CD4-positive, alpha-beta T cell (primary cell): ENCODE measurements at regions of chr10 and their contacts with region 1.

Region 1: DNA sequence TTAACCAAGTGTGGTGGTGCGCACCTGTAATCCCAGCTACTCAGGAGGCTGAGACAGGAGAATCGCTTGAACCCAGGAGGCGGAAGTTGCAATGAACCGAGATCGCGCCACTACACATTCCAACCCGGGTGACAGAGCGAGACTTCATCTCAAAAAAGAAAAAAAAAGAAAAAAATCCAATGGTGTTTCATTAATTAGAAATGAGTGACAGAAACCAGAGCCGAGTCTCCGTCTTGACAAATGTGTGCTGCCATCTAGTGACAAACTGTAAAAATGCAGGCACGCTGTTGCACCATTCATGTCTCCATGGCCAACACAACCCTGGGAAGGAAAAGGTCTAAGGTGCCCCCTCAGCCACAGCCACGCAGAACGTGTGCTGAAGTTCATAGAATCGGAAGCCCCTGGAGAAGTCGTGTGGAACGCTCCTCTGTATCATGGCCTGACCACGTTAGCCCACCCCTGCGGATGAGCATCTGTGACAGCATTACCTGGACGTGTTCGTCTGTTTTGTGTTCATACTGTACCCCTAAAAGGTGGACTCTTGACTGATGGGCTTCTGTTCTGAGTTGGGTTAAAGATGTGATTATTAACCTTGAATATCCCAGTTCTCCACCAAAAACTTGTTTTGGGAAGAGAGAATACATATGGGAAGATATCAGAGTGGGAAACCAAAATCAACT is 94.9 kb downstream of the LYZL2 start:
- DNase-seq: peak; percentile 52 to 89 (median 66)
- ATAC-seq: peak; percentile 39
- H3K4me3 ChIP-seq: no peak overlapping the region
- H3K4me3 Mint-ChIP-seq: no peak overlapping the region
- H3K27ac ChIP-seq: no peak overlapping the region
- H3K27ac Mint-ChIP-seq: no peak overlapping the region
- H3K4me1 ChIP-seq: peaks cover 19% of the 10 kb centered on the region
- H3K4me1 Mint-ChIP-seq: peaks cover 20% of the 10 kb centered on the region
- H3K27me3 ChIP-seq: no peaks in the 10 kb centered on the region
- H3K27me3 Mint-ChIP-seq: no peaks in the 10 kb centered on the region
- CTCF ChIP-seq: peak; percentile 87

Region 2: DNA sequence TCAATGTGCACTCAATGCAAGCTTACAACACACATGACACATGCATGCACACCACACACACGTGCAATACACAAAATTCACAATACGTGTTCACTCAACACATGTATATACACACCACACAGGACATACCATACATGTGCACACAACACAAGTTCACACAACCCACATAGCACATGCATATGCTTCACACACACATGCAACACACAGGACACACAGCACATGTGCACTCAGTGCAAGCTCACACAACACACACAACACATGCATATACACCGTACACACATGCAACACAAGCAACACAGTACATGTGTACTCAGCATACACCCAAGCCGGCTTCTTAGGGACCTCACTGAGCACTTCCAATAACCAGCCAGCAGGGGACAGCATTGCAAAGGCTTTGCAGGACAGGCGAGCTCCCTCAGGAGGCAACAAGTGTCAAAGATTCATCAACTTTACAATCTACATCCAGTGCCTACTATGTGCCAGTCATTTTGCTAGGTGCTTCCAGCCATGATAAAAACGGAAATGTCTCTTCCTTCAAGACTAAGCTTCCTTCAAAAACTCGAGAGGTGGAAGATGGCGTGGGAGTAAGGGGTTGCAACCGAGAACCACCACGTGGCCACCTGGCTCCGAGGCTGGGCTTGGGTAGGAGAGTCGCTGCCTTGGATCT is 536.3 kb before region 1 on chr10:
- CTCF ChIA-PET with region 1: no interaction called
- POLR2A ChIA-PET with region 1: no interaction called
- intact Hi-C with region 1: loop called in 1 of 2 experiments (anchors 5 kb)
- DNase-seq: peak; percentile 62 to 87 (median 68)
- ATAC-seq: peak; percentile 92
- H3K4me3 ChIP-seq: no peak overlapping the region
- H3K4me3 Mint-ChIP-seq: no peak overlapping the region
- H3K27ac ChIP-seq: no peak overlapping the region
- H3K27ac Mint-ChIP-seq: no peak overlapping the region
- H3K4me1 ChIP-seq: peaks cover 6% of the 10 kb centered on the region
- H3K4me1 Mint-ChIP-seq: peaks cover 8% of the 10 kb centered on the region
- H3K27me3 ChIP-seq: peaks cover 17 to 25% of the 10 kb centered on the region in 2 experiments
- H3K27me3 Mint-ChIP-seq: peaks cover 79% of the 10 kb centered on the region
- CTCF ChIP-seq: peak; percentile 92

Region 3: DNA sequence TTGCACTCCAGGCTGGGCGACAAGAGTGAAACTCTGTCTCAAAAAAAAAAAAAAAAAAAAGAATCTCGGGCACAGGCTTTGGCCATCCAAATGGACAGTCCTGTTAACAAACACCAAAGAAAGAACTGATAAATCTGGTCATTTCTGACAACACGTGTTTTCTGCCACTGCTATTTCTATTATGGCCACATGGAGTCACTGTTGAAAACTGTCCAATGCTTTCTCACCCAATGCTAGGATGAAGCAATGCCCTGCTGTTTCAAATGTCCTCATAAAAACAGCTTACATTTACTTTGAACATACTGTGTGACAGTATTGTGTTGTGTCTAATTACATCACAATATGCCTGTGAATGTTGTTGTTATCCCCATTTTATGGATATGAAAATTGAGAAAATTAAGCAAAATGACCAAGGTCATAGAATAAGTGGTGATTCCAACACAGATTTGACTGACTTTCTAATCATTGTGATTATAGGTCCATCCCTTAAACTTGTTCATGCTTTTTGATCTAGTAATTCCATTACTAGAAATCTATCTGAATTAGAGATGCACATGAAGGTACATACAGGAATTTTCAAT is 120.5 kb before region 1 on chr10:
- CTCF ChIA-PET with region 1: interaction called, 14 read pairs
- POLR2A ChIA-PET with region 1: interaction called, 34 read pairs
- intact Hi-C with region 1: loop called (anchors 1 kb)
- DNase-seq: peak in 4 of 14 experiments; percentile 40 to 78 (median 72)
- ATAC-seq: peak; percentile 64
- H3K4me3 ChIP-seq: no peak overlapping the region
- H3K4me3 Mint-ChIP-seq: no peak overlapping the region
- H3K27ac ChIP-seq: no peak overlapping the region
- H3K27ac Mint-ChIP-seq: no peak overlapping the region
- H3K4me1 ChIP-seq: peaks cover 11% of the 10 kb centered on the region
- H3K4me1 Mint-ChIP-seq: peaks cover 13% of the 10 kb centered on the region
- H3K27me3 ChIP-seq: no peaks in the 10 kb centered on the region
- H3K27me3 Mint-ChIP-seq: no peaks in the 10 kb centered on the region
- CTCF ChIP-seq: peak; percentile 81

Region 4: DNA sequence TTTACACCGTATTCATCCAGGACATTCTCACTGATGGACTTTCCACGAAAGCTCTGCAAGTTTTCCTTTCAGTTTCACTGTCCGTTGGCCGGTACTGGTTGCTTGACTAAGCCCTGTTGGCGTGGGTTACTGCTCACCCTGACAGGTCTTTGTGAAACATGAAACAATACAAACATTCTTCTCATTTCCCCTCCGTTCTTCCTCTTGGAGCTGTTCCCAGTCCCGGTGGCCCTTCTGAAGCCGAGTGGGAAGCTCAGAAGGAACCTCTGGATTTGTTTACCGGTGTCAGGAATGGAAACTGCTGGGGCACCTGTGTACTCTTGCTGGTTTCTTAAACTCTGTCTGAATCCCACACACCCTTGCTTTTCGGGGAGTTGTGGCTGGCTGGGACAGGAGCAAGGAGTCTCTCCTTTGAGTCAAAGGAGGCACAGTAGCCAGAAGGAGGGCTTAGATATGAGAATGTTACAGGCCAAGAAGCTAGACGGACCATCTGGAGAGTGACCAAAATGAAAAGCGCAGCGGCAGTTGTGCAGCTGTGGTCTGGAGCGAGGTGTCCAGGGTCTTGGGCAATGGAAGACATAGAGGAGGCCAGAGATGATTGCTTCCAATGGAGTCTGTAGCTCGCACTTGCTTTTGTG is 49.3 kb after region 1 on chr10:
- CTCF ChIA-PET with region 1: no interaction called
- POLR2A ChIA-PET with region 1: interaction called, 3 read pairs
- intact Hi-C with region 1: loop called in 1 of 2 experiments (anchors 5 kb)
- DNase-seq: peak in 3 of 14 experiments; percentile 23 to 54 (median 51)
- ATAC-seq: no peak
- H3K4me3 ChIP-seq: peak overlapping the region; percentile 11
- H3K4me3 Mint-ChIP-seq: peak overlapping the region; percentile 12
- H3K27ac ChIP-seq: no peak overlapping the region
- H3K27ac Mint-ChIP-seq: no peak overlapping the region
- H3K4me1 ChIP-seq: peaks cover 10% of the 10 kb centered on the region
- H3K4me1 Mint-ChIP-seq: no peaks in the 10 kb centered on the region
- H3K27me3 ChIP-seq: no peaks in the 10 kb centered on the region
- H3K27me3 Mint-ChIP-seq: no peaks in the 10 kb centered on the region
- CTCF ChIP-seq: no peak

Region 5: DNA sequence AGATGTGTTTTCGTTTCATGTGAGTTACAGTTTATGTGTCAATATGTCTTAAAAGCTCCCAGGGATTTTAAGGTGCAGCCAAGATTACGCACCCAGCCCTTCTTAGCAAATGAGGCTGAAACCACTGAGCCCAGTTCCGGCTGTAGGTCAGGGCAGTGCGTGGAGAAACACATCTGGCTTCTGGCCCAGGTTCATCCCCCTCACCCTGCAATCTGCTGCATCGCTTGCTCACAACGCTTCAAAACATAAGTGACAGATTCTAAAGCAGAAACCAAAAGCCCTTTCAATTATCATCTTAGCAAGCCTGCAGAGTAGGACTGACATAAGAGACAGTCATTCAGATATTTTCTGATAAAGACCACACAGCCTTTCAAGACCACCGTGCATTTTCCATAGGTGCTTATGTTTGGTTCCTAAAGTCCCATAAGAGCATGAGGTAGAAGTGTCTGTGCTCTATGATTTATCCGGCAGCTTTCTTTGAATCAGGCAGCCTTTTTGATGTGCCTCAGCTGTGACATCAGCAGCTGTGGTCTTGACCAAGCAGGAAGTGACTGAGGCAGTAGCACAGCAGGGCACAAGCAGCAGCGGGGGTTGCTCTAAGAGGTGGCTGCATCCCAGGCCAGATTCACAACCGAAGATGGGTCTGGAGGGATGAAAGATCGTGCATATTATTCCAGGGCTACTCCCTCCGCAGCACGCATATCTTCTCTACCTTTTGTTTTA is 167.0 kb after region 1 on chr10:
- CTCF ChIA-PET with region 1: no interaction called
- POLR2A ChIA-PET with region 1: interaction called, 6 read pairs
- intact Hi-C with region 1: loop called in 1 of 2 experiments (anchors 5 kb)
- DNase-seq: peak; percentile 41 to 87 (median 62)
- ATAC-seq: peak; percentile 65
- H3K4me3 ChIP-seq: peak overlapping the region; percentile 43
- H3K4me3 Mint-ChIP-seq: peak overlapping the region; percentile 85
- H3K27ac ChIP-seq: peak overlapping the region; percentile 51 to 74
- H3K27ac Mint-ChIP-seq: peak overlapping the region; percentile 99
- H3K4me1 ChIP-seq: peaks cover 81% of the 10 kb centered on the region
- H3K4me1 Mint-ChIP-seq: peaks cover 87% of the 10 kb centered on the region
- H3K27me3 ChIP-seq: no peaks in the 10 kb centered on the region
- H3K27me3 Mint-ChIP-seq: no peaks in the 10 kb centered on the region
- CTCF ChIP-seq: no peak